Cardiac septum (tissue), 1 donor: ENCODE measurements at regions of chr15 and their contacts with region 1.

Region 1: GRCh38 chr15:68924866-68925560 is 5.3 kb upstream of the SPESP1 start:
- DNase-seq: peak; percentile 78

Region 2: DNA sequence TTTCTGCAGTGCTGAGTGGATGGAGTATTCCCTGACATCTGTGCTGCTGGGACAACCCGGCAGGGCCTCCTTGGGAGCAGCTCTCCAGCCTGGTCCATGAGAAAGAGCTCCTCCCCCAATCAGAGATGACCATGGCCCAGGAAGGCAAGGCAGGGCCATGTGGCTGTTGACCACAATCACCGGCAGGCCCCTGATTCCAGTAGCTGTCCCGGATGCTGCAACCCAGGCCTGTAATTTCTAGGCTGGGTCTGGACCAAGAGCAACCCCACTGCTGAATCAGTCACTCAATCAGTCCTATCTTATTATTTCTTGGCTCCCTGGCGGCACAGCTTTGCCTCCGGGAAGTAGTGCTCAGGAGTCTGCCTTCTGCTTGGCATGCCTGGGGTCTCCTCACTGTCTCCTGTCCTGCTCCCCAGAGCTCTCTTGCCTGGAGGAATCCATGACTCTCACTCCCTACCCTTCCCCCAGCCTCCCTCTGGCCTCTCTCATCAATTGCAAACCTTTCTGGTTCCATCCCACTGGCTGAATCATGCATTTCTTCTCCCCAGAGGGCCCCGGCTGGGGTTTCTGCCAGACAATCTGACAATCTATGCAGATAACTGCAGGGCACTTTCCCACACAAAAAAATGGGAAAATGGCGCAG is 460.4 kb before region 1 on chr15:
- intact Hi-C with region 1: no loop called
- DNase-seq: no peak

Region 3: GRCh38 chr15:68553994-68554720 is 370.9 kb before region 1 on chr15:
- intact Hi-C with region 1: loop called (anchors 2 kb)
- DNase-seq: peak; percentile 79

Region 4: GRCh38 chr15:68795298-68795848 is 129.6 kb before region 1 on chr15:
- intact Hi-C with region 1: no loop called
- DNase-seq: peak; percentile 97